Calu3 (cell line): ENCODE measurements at regions of chr5 and their contacts with region 1.

Region 1: GRCh38 chr5:78359831-78360673 is at the start of gene SCAMP1:
- DNase-seq: peak; percentile 98
- H3K4me3 Mint-ChIP-seq: peak within 1 kb of the TSS; percentile 92
- H3K27ac Mint-ChIP-seq: peak within 1 kb of the TSS; percentile 93
- H3K4me1 Mint-ChIP-seq: peaks cover 48% of the 10 kb centered on the region
- H3K27me3 Mint-ChIP-seq: no peaks in the 10 kb centered on the region
- CTCF ChIP-seq: no peak
- total RNA-seq, gene SCAMP1: 59.5 and 62.2 TPM in 2 replicates

Region 2: DNA sequence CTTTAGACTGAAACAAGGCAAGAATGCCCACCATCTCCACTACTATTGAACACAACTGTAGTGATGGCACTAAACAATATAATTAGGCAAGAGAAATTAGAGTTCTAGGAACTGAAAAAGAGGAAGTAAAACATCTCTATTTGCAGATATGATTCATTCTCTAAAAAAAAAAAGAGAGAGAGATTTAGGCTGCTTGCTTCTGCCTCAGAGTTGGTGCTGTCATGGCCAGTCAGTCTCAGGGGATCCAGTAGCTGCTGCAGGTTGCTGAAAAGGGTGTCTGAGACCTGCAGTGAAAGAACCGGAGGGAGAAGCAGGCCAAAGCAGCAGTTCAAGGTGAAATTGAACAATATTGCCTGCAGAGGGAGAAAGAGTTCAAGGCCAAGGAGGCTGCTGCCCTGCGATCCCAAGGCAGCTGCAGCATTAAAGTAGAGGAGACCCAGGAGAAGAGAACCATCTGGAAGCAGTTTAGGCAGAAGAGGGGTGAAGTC is 138.0 kb before region 1 on chr5:
- CTCF ChIA-PET with region 1: no interaction called
- intact Hi-C with region 1: no loop called
- DNase-seq: peak; percentile 30
- H3K4me3 Mint-ChIP-seq: no peak overlapping the region
- H3K27ac Mint-ChIP-seq: peak overlapping the region; percentile 60
- H3K4me1 Mint-ChIP-seq: peaks cover 10% of the 10 kb centered on the region
- H3K27me3 Mint-ChIP-seq: no peaks in the 10 kb centered on the region
- CTCF ChIP-seq: peak; percentile 51

Region 3: DNA sequence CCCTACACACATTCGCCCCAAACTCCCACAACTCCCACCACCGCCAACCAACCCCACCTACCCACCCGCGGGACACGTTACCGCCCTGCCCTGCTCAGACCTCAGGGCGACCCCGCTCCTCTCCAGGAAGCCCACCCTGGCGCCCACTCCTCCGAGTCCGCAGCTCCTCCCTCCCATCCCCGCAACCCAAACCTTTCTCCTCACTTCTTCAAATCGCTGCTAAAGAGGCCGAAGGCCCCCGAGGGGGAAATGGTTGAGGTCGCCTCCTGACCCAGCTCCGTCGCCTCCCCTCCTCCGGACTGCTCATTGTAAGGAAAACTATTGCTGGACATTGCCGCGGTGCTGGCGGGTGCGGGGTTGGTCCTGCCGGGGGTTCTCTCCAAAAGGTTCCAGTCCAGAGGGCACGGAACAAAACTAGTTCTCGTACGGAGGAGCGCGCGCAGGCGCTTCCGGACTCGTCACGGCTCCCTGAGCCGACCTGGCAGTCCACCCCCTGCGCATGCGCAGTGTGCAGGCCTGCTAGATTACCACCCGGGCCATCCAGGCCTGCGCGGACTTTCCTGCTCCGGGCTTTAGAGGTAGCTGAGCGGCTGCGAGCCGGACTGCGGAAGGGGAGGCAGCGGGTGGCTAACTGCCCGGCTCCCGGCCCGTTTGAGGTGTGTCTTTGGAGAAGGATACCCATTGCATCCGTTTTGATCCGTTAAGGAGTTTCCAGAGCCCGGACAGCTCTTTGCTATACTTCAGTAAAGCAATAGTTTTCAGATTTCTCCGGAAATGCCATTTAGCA is 65.6 kb before region 1 on chr5 and contains the start of gene AP3B1:
- CTCF ChIA-PET with region 1: interaction called, 11 read pairs
- intact Hi-C with region 1: loop called (anchors 2 kb)
- DNase-seq: peak; percentile 100
- H3K4me3 Mint-ChIP-seq: peak within 1 kb of the TSS; percentile 79
- H3K27ac Mint-ChIP-seq: peak within 1 kb of the TSS; percentile 80
- H3K4me1 Mint-ChIP-seq: peaks cover 30% of the 10 kb centered on the region
- H3K27me3 Mint-ChIP-seq: no peaks in the 10 kb centered on the region
- CTCF ChIP-seq: no peak
- total RNA-seq, gene AP3B1: 65.8 and 66.9 TPM in 2 replicates

Region 4: GRCh38 chr5:78424665-78425064 is 64.6 kb after region 1 on chr5:
- CTCF ChIA-PET with region 1: no interaction called
- intact Hi-C with region 1: no loop called
- DNase-seq: no peak
- H3K4me3 Mint-ChIP-seq: no peak overlapping the region
- H3K27ac Mint-ChIP-seq: no peak overlapping the region
- H3K4me1 Mint-ChIP-seq: peaks cover 6% of the 10 kb centered on the region
- H3K27me3 Mint-ChIP-seq: no peaks in the 10 kb centered on the region
- CTCF ChIP-seq: no peak